CD8-positive, alpha-beta T cell (primary cell): ENCODE measurements at regions of chr20 and their contacts with region 1.

Region 1: DNA sequence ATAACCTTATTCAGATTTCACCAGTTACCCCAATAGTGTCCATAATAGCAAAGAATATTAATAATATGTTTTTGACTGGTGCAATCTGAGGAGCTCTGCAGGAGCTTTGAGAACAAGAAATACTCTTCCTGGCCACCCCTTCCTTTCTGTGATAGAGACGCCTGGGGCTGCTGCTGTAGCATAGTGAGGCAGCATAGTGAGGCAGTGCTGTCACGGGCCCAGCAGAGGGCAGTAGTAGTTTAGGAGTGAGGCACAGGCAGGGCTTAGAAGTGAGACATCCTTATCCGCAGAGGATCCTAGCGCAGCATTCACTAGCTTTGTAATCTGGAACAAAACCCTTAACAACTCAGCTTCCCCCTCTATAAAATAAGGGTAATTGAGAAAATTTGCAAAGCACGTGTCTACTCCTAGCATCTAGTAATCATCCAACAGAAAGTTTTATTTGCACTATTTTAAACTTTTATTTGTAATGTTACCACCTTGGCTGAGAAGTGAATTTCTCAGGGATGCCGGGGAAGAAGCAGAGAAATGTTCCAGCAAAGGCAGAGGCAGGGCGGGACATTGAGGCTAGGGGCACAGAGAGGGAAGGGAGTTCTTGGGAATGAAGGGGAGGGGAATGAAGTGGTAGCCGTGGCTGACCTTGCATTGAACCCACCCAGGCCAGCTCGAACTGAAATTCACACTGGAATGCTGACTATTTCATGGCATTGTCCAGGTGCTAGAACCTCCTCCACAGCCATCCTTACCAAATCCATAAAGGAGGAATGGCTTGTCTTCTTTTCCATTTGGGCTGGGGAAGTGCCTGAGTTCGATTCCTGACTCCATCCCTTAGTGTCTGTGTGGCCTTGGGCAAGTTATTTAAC is 78.8 kb downstream of the CDS2 start:
- DNase-seq: peak; percentile 37 to 79 (median 70)
- ATAC-seq: peak; percentile 99
- H3K4me3 ChIP-seq: no peak overlapping the region
- H3K4me3 Mint-ChIP-seq: no peak overlapping the region
- H3K27ac ChIP-seq: no peak overlapping the region
- H3K27ac Mint-ChIP-seq: no peak overlapping the region
- H3K4me1 ChIP-seq: no peaks in the 10 kb centered on the region
- H3K4me1 Mint-ChIP-seq: peaks cover 4% of the 10 kb centered on the region
- H3K27me3 ChIP-seq: no peaks in the 10 kb centered on the region
- H3K27me3 Mint-ChIP-seq: no peaks in the 10 kb centered on the region
- CTCF ChIP-seq: peak; percentile 83

Region 2: DNA sequence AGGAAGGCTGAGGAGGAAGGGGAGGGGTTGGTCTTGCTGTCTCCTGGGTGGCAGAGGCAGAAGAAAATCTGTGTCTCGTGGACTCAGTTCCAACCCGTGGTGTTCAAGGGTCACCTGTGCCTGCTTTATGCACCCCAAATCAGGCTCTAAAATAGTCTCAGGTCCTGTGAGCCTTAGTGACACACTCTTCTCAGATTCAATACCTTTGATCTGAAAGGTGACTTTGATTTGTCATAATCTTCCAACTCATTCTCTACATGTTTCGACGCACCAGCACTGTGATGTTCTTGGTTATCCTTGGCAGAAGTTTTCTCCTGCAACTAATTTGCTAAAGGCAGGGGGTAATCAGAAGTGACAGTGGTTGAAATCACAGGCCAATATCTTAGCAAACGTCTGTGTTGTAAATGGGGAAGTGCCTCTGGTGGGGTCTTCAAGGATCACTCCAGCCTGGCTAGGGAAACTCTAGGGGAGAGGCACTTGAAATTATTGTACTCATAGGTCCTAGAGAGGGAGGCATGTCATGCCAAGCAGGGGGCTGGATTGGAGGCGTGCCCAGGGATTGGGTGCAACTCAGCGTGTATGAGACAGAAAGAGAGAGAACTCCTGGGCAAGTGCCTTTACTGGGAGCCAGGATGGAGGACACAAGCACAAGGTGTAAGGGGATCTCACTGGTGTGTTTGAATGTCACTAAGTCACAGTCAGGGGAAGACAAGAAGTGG is 502.9 kb before region 1 on chr20:
- CTCF ChIA-PET with region 1: no interaction called
- POLR2A ChIA-PET with region 1: no interaction called
- intact Hi-C with region 1: no loop called
- DNase-seq: no peak
- ATAC-seq: no peak
- H3K4me3 ChIP-seq: no peak overlapping the region
- H3K4me3 Mint-ChIP-seq: no peak overlapping the region
- H3K27ac ChIP-seq: no peak overlapping the region
- H3K27ac Mint-ChIP-seq: no peak overlapping the region
- H3K4me1 ChIP-seq: no peaks in the 10 kb centered on the region
- H3K4me1 Mint-ChIP-seq: peaks cover 3% of the 10 kb centered on the region
- H3K27me3 ChIP-seq: no peaks in the 10 kb centered on the region
- H3K27me3 Mint-ChIP-seq: no peaks in the 10 kb centered on the region
- CTCF ChIP-seq: no peak

Region 3: DNA sequence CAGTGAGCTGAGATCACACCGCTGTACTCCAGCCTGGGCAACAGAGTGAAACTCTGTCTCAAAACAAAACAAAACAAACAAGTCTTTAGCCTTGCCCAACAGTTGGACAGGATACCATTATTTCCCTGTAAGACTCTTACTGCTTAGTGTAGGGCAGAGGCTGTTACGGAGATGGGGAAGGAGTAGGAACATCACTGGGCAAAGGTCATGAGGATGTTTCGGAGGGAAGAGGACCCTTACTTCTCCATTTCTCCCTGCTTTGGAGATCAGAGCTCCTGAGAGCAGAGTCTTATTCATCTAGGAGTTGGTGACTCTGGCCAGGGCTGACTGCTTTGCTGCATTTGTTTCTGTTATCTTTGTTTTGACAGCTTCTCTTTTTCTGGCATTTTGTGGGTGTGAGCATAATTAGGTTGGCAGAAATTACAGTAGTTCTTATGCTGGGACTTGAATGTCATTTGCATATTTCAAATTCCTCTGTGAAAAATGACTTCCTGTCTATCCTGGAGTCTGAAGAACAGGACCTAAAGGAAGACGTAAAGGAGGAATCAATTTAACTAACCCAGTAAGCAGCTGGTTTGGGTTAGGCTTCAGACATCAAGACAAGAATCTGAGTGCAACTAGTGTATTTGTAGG is 10.2 kb after region 1 on chr20:
- CTCF ChIA-PET with region 1: interaction called, 69 read pairs
- POLR2A ChIA-PET with region 1: no interaction called
- intact Hi-C with region 1: no loop called
- DNase-seq: no peak
- ATAC-seq: no peak
- H3K4me3 ChIP-seq: no peak overlapping the region
- H3K4me3 Mint-ChIP-seq: no peak overlapping the region
- H3K27ac ChIP-seq: no peak overlapping the region
- H3K27ac Mint-ChIP-seq: peak overlapping the region; percentile 32
- H3K4me1 ChIP-seq: no peaks in the 10 kb centered on the region
- H3K4me1 Mint-ChIP-seq: no peaks in the 10 kb centered on the region
- H3K27me3 ChIP-seq: no peaks in the 10 kb centered on the region
- H3K27me3 Mint-ChIP-seq: no peaks in the 10 kb centered on the region
- CTCF ChIP-seq: no peak

Region 4: DNA sequence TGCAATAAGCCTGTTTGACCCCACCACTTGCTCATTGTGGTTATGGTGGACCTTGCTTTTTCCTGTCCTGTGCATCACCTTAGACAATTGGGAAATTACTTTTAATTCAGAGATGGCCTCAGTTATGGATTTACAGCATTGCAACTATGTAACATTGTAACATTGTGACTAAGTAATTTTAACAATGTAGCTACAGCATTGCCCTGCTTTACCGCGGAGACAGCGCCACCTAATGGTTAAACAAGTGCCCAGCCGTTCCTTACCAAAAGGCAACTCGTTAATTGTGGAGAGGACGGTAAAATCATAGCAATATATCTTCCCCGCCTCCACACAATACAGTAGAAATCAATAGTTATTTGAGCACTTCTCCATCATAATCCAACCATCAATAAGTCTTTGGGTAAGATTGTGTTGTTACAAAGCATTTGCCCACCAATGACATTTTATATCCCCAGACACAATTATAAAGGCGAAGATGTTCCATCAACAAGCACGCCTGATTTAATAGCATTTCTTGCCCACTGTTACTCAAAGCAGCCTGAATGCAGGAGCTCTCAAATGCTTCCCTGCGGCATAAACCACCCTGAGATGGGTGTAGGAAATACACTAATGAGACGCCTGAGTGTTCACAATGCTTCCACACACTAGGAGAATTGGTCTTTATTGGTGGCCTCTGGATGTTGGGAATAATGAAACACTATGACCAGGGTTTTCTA is 17.5 kb after region 1 on chr20:
- CTCF ChIA-PET with region 1: interaction called, 69 read pairs
- POLR2A ChIA-PET with region 1: no interaction called
- intact Hi-C with region 1: loop called in 1 of 2 experiments (anchors 2 kb)
- DNase-seq: peak in 8 of 9 experiments; percentile 28 to 66 (median 51)
- ATAC-seq: peak; percentile 38
- H3K4me3 ChIP-seq: no peak overlapping the region
- H3K4me3 Mint-ChIP-seq: no peak overlapping the region
- H3K27ac ChIP-seq: no peak overlapping the region
- H3K27ac Mint-ChIP-seq: no peak overlapping the region
- H3K4me1 ChIP-seq: no peaks in the 10 kb centered on the region
- H3K4me1 Mint-ChIP-seq: no peaks in the 10 kb centered on the region
- H3K27me3 ChIP-seq: no peaks in the 10 kb centered on the region
- H3K27me3 Mint-ChIP-seq: peaks cover 5% of the 10 kb centered on the region
- CTCF ChIP-seq: peak; percentile 72

Region 5: DNA sequence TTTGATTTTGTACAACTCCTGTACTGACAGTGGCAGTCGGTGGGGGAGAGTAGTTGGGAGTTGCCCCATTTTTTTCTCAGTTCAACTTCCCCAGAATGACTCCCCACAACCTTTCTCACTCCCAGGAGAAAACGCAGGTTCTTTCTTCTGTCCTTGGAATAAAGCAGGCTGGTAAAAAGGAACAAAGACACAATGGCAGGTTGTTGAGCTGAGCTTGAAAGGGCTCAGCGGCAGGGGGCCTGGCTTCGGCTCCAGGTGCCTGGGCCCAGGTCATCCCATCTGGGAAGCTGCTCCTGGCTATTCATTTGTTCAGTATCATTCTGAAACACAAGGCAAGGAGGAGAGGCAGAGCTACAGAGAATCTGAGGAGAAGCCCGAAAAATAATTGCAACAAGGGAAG is 65.0 kb after region 1 on chr20:
- CTCF ChIA-PET with region 1: no interaction called
- POLR2A ChIA-PET with region 1: no interaction called
- intact Hi-C with region 1: no loop called
- DNase-seq: no peak
- ATAC-seq: no peak
- H3K4me3 ChIP-seq: no peak overlapping the region
- H3K4me3 Mint-ChIP-seq: no peak overlapping the region
- H3K27ac ChIP-seq: no peak overlapping the region
- H3K27ac Mint-ChIP-seq: no peak overlapping the region
- H3K4me1 ChIP-seq: peaks cover 5% of the 10 kb centered on the region
- H3K4me1 Mint-ChIP-seq: peaks cover 13% of the 10 kb centered on the region
- H3K27me3 ChIP-seq: no peaks in the 10 kb centered on the region
- H3K27me3 Mint-ChIP-seq: peaks cover 10% of the 10 kb centered on the region
- CTCF ChIP-seq: no peak

Region 6: DNA sequence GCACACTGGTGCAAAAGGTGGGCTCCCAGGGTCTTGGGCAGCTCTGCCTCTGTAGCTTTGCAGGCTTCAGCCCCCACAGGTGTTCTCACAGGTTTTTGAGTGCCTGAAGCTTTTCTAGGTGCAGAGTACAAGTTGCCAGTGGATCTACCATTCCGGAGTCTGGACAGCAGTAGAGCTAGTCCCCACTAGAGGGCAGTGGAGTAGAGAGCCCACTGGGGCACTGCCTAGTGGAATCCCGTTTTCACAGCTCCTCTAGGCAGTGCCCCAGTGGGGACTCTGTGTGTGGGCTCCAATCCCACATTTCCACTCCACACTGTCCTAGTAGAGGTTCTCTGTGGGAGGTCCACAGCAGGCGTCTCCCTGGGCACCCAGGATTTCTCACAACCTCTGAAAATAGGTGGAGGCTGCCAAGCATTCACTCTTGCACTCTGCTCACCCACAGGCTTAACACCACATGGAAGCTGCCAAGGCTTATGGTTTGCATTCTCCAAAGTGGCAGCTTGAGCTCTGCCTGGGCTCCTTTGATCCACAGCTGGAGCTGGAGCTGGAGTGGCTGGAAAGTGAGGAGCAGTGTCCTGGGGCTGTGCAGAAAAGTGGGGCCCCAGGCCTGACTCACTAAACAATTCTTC is 197.4 kb after region 1 on chr20:
- CTCF ChIA-PET with region 1: no interaction called
- POLR2A ChIA-PET with region 1: no interaction called
- intact Hi-C with region 1: no loop called
- DNase-seq: peak in 2 of 9 experiments; percentile 16
- ATAC-seq: no peak
- H3K4me3 ChIP-seq: no peak overlapping the region
- H3K4me3 Mint-ChIP-seq: no peak overlapping the region
- H3K27ac ChIP-seq: no peak overlapping the region
- H3K27ac Mint-ChIP-seq: no peak overlapping the region
- H3K4me1 ChIP-seq: no peaks in the 10 kb centered on the region
- H3K4me1 Mint-ChIP-seq: no peaks in the 10 kb centered on the region
- H3K27me3 ChIP-seq: no peaks in the 10 kb centered on the region
- H3K27me3 Mint-ChIP-seq: peaks cover 21% of the 10 kb centered on the region
- CTCF ChIP-seq: no peak

Region 7: GRCh38 chr20:5448449-5449118 is 243.0 kb after region 1 on chr20:
- CTCF ChIA-PET with region 1: interaction called, 27 read pairs
- POLR2A ChIA-PET with region 1: no interaction called
- intact Hi-C with region 1: loop called in 1 of 2 experiments (anchors 1 kb)
- DNase-seq: peak in 7 of 9 experiments; percentile 26 to 61 (median 52)
- ATAC-seq: no peak
- H3K4me3 ChIP-seq: no peak overlapping the region
- H3K4me3 Mint-ChIP-seq: no peak overlapping the region
- H3K27ac ChIP-seq: no peak overlapping the region
- H3K27ac Mint-ChIP-seq: no peak overlapping the region
- H3K4me1 ChIP-seq: no peaks in the 10 kb centered on the region
- H3K4me1 Mint-ChIP-seq: no peaks in the 10 kb centered on the region
- H3K27me3 ChIP-seq: peaks cover 0 to 2% of the 10 kb centered on the region in 2 experiments
- H3K27me3 Mint-ChIP-seq: peaks cover 15% of the 10 kb centered on the region
- CTCF ChIP-seq: peak; percentile 72

Region 8: DNA sequence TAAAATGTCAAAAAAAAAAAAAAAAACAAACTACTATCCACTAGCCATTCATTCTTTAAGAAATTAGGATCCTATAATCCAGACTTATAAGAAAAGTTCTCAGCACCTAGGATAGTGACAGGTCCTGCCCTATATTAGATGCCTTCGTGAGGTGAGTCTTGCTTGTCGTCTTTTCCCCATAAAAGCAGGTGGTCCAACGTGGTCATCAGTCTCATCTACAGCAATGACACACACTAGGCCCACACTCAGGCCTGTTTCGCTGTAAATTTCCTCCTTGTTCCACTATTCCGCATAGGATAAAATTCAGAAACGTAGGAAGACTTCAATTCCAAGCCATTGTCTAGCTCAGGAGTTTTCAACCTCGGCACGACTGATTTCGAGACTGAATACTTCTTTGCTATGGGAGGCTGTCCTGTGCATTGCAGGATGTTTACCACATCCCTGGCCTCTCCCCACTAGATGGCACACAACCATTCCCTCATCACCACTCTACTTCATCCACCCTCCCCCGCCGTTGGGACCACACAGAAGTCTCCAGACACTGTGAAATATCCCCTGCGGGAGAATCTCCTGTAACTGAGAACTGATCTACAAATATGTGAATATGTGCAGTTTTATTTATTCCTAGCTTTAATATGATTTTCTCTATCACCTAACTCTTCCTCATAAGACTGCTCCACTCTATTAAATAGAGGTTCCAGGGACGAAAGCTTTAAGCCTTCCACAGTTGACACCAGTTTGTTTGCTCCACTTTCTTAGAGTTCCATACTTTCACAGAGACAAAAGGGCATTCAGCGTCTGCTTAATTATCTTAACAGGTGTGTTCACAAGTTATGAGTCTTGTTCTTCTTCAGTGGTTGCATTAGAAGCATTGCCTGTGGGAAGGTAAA is 1908.2 kb after region 1 on chr20:
- CTCF ChIA-PET with region 1: no interaction called
- POLR2A ChIA-PET with region 1: no interaction called
- intact Hi-C with region 1: no loop called
- DNase-seq: no peak
- ATAC-seq: no peak
- H3K4me3 ChIP-seq: no peak overlapping the region
- H3K4me3 Mint-ChIP-seq: no peak overlapping the region
- H3K27ac ChIP-seq: no peak overlapping the region
- H3K27ac Mint-ChIP-seq: no peak overlapping the region
- H3K4me1 ChIP-seq: no peaks in the 10 kb centered on the region
- H3K4me1 Mint-ChIP-seq: no peaks in the 10 kb centered on the region
- H3K27me3 ChIP-seq: no peaks in the 10 kb centered on the region
- H3K27me3 Mint-ChIP-seq: no peaks in the 10 kb centered on the region
- CTCF ChIP-seq: no peak